CD8-positive, alpha-beta T cell (primary cell): ENCODE measurements at regions of chr5 and their contacts with region 1.

Region 1: DNA sequence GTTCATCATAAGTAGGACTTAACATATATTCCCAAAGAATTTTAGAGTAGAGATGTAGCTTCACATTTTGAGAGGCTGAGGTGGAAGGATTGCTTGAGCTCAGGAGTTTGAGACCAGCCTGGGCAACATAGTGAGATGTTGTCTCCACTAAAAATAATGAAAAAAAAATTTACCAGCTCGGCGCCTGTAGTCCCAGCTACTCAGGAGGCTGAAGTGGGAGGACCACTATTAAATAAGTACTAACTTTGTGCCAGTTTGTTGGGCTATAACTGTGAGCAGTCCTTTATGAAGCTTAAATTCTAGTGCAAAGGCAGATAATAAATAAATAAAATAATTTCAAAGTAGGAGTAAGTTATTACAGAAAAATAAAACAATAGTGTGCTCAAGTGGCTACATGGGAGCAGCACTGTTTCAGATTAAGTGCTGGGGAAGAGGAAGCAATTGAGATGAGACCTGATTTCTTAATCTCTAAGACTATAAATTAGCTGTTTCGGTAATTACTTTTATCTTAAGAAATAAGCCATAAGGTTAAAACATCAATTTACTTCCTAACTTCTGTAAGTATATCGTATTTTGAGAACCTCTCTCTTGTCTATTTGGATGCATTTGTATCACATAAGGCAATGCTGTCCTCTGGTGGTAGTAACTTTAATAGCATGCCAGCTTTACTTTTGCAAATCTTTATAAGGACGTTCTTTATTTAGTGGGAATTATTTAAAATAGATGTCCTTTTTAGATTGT is 98.9 kb downstream of the CSNK1G3 start:
- DNase-seq: peak in 3 of 9 experiments; percentile 28 to 77 (median 70)
- ATAC-seq: peak; percentile 76
- H3K4me3 ChIP-seq: no peak overlapping the region
- H3K4me3 Mint-ChIP-seq: no peak overlapping the region
- H3K27ac ChIP-seq: no peak overlapping the region
- H3K27ac Mint-ChIP-seq: peak overlapping the region; percentile 87
- H3K4me1 ChIP-seq: no peaks in the 10 kb centered on the region
- H3K4me1 Mint-ChIP-seq: peaks cover 3% of the 10 kb centered on the region
- H3K27me3 ChIP-seq: no peaks in the 10 kb centered on the region
- H3K27me3 Mint-ChIP-seq: no peaks in the 10 kb centered on the region
- CTCF ChIP-seq: peak; percentile 99

Region 2: GRCh38 chr5:122192497-122193496 is 1418.0 kb before region 1 on chr5:
- CTCF ChIA-PET with region 1: interaction called, 6 read pairs
- POLR2A ChIA-PET with region 1: no interaction called
- intact Hi-C with region 1: loop called (anchors 1 to 10 kb)
- DNase-seq: peak in 2 of 9 experiments; percentile 7 to 20
- ATAC-seq: no peak
- H3K4me3 ChIP-seq: no peak overlapping the region
- H3K4me3 Mint-ChIP-seq: no peak overlapping the region
- H3K27ac ChIP-seq: no peak overlapping the region
- H3K27ac Mint-ChIP-seq: no peak overlapping the region
- H3K4me1 ChIP-seq: no peaks in the 10 kb centered on the region
- H3K4me1 Mint-ChIP-seq: no peaks in the 10 kb centered on the region
- H3K27me3 ChIP-seq: no peaks in the 10 kb centered on the region
- H3K27me3 Mint-ChIP-seq: peaks cover 13% of the 10 kb centered on the region
- CTCF ChIP-seq: no peak

Region 3: DNA sequence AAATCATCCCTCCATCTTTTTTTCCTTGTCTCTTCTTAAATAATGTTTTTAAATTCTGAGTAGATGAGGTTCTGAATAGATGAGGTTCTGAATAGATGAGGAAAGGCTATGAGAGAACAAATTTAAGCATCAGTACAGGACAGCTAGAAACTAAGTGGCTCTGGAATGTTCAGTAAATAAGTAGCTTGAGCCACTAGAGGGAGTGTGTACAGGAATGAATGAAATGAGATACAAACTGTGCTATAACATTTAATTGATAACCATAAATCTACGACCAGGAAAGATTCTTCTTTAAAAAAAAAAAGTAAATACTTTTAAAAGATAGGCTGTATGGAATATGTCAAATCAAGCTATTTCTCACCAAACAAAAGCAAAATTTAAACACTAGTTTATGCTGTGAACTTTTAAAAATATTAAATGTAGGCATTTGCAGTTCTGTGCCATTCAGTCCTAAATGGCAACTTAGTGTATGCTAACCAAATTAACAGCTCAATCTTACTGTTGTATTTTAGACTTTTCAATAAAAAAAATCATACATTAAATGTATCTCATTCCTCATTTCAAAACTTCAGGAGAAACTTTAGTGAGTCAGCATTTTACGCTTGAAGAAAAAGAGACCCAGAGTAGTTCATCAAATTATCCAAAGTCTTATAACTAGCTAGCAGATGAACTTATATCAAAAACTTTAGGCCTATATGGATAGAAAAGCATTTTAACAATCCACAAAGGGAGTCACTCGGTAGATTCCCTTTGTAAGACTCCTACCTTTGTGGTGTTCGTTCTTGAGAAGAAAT is 906.4 kb before region 1 on chr5:
- CTCF ChIA-PET with region 1: no interaction called
- POLR2A ChIA-PET with region 1: no interaction called
- intact Hi-C with region 1: loop called in 1 of 2 experiments (anchors 5 kb)
- DNase-seq: peak in 2 of 9 experiments; percentile 20 to 22
- ATAC-seq: no peak
- H3K4me3 ChIP-seq: no peak overlapping the region
- H3K4me3 Mint-ChIP-seq: no peak overlapping the region
- H3K27ac ChIP-seq: no peak overlapping the region
- H3K27ac Mint-ChIP-seq: no peak overlapping the region
- H3K4me1 ChIP-seq: no peaks in the 10 kb centered on the region
- H3K4me1 Mint-ChIP-seq: no peaks in the 10 kb centered on the region
- H3K27me3 ChIP-seq: no peaks in the 10 kb centered on the region
- H3K27me3 Mint-ChIP-seq: peaks cover 9% of the 10 kb centered on the region
- CTCF ChIP-seq: peak; percentile 53

Region 4: GRCh38 chr5:122896598-122897282 is 714.1 kb before region 1 on chr5:
- CTCF ChIA-PET with region 1: no interaction called
- POLR2A ChIA-PET with region 1: no interaction called
- intact Hi-C with region 1: loop called (anchors 2 kb)
- DNase-seq: peak in 2 of 9 experiments; percentile 15 to 19
- ATAC-seq: no peak
- H3K4me3 ChIP-seq: no peak overlapping the region
- H3K4me3 Mint-ChIP-seq: no peak overlapping the region
- H3K27ac ChIP-seq: no peak overlapping the region
- H3K27ac Mint-ChIP-seq: no peak overlapping the region
- H3K4me1 ChIP-seq: no peaks in the 10 kb centered on the region
- H3K4me1 Mint-ChIP-seq: peaks cover under 1% of the 10 kb centered on the region
- H3K27me3 ChIP-seq: no peaks in the 10 kb centered on the region
- H3K27me3 Mint-ChIP-seq: no peaks in the 10 kb centered on the region
- CTCF ChIP-seq: no peak

Region 5: GRCh38 chr5:123371575-123372179 is 239.2 kb before region 1 on chr5:
- CTCF ChIA-PET with region 1: interaction called, 6 read pairs
- POLR2A ChIA-PET with region 1: no interaction called
- intact Hi-C with region 1: loop called in 1 of 2 experiments (anchors 5 kb)
- DNase-seq: peak in 7 of 9 experiments; percentile 6 to 52 (median 35)
- ATAC-seq: no peak
- H3K4me3 ChIP-seq: no peak overlapping the region
- H3K4me3 Mint-ChIP-seq: no peak overlapping the region
- H3K27ac ChIP-seq: no peak overlapping the region
- H3K27ac Mint-ChIP-seq: no peak overlapping the region
- H3K4me1 ChIP-seq: no peaks in the 10 kb centered on the region
- H3K4me1 Mint-ChIP-seq: peaks cover 5% of the 10 kb centered on the region
- H3K27me3 ChIP-seq: no peaks in the 10 kb centered on the region
- H3K27me3 Mint-ChIP-seq: no peaks in the 10 kb centered on the region
- CTCF ChIP-seq: peak; percentile 53

Region 6: GRCh38 chr5:123382252-123382651 is 228.6 kb before region 1 on chr5:
- CTCF ChIA-PET with region 1: interaction called, 3 read pairs
- POLR2A ChIA-PET with region 1: no interaction called
- intact Hi-C with region 1: loop called in 1 of 2 experiments (anchors 5 kb)
- DNase-seq: no peak
- ATAC-seq: no peak
- H3K4me3 ChIP-seq: no peak overlapping the region
- H3K4me3 Mint-ChIP-seq: no peak overlapping the region
- H3K27ac ChIP-seq: no peak overlapping the region
- H3K27ac Mint-ChIP-seq: no peak overlapping the region
- H3K4me1 ChIP-seq: no peaks in the 10 kb centered on the region
- H3K4me1 Mint-ChIP-seq: no peaks in the 10 kb centered on the region
- H3K27me3 ChIP-seq: no peaks in the 10 kb centered on the region
- H3K27me3 Mint-ChIP-seq: no peaks in the 10 kb centered on the region
- CTCF ChIP-seq: no peak

Region 7: DNA sequence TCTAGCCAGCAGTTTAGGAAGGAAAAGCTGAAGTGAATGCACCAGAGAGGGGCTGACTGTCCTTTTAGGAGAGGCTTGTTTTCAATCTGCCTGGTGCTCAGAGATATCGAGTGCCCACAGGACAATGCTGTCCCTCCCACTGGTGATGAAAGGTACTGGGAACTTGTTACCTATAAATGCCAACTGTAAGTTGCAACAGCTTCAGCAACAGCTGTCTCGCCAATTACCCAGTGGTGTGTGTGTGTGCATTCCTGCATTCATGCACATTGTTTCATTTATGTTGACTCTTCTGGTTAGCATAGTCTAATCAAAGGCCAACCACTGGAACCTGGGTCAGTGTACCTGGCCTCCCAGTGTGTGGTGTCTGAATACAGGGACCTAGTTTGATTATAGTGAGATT is 62.3 kb after region 1 on chr5:
- CTCF ChIA-PET with region 1: no interaction called
- POLR2A ChIA-PET with region 1: no interaction called
- intact Hi-C with region 1: no loop called
- DNase-seq: no peak
- ATAC-seq: no peak
- H3K4me3 ChIP-seq: no peak overlapping the region
- H3K4me3 Mint-ChIP-seq: no peak overlapping the region
- H3K27ac ChIP-seq: no peak overlapping the region
- H3K27ac Mint-ChIP-seq: no peak overlapping the region
- H3K4me1 ChIP-seq: no peaks in the 10 kb centered on the region
- H3K4me1 Mint-ChIP-seq: no peaks in the 10 kb centered on the region
- H3K27me3 ChIP-seq: peaks cover 0 to 2% of the 10 kb centered on the region in 2 experiments
- H3K27me3 Mint-ChIP-seq: no peaks in the 10 kb centered on the region
- CTCF ChIP-seq: no peak

Region 8: GRCh38 chr5:123700398-123701287 is 89.8 kb after region 1 on chr5:
- CTCF ChIA-PET with region 1: no interaction called
- POLR2A ChIA-PET with region 1: no interaction called
- intact Hi-C with region 1: no loop called
- DNase-seq: no peak
- ATAC-seq: no peak
- H3K4me3 ChIP-seq: no peak overlapping the region
- H3K4me3 Mint-ChIP-seq: no peak overlapping the region
- H3K27ac ChIP-seq: no peak overlapping the region
- H3K27ac Mint-ChIP-seq: no peak overlapping the region
- H3K4me1 ChIP-seq: no peaks in the 10 kb centered on the region
- H3K4me1 Mint-ChIP-seq: no peaks in the 10 kb centered on the region
- H3K27me3 ChIP-seq: no peaks in the 10 kb centered on the region
- H3K27me3 Mint-ChIP-seq: no peaks in the 10 kb centered on the region
- CTCF ChIP-seq: no peak